HEK293T (cell line): ENCODE measurements at regions of chr21 and their contacts with region 1.

Region 1: DNA sequence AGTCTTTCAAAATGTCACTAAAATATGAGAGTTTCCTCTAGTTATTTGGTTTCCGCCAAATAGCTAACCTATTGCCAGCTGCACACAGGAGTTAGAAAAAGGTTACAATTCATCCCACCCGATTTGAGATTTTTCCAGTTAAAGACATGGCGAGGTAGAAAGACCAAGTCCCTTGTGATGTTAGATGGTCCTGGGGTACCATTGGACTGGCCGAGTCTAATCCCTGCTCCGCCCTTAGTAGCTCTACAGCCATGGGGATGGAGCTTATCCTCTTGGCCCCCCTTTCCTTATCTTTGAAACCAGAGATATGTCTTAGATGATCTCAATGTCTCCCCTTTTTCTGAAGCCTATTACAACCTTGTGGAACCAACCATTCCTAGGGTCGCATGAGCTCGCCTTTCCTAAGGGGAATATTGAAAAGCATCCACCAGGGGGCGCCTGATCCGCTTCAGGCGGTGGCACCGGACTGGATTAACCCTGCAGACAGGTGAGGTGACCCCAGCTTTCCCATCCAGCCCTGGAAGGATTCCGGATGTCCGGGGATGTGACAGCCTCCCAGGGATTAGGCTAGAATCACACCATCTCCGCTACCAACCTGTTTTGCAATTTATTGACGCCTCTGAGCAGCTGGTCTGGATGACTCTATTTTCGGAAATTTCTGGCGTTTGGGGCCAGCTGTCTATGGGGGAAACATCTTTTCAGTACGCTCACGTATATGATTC is 68.3 kb upstream of the SIM2 start:
- DNase-seq: peak; percentile 83

Region 2: GRCh38 chr21:36640721-36641244 is 10.1 kb after region 1 on chr21:
- CTCF ChIA-PET with region 1: interaction called, 16 read pairs
- POLR2A ChIA-PET with region 1: no interaction called
- DNase-seq: peak; percentile 31

Region 3: GRCh38 chr21:36661511-36662309 is 31.1 kb after region 1 on chr21:
- CTCF ChIA-PET with region 1: interaction called, 13 read pairs
- POLR2A ChIA-PET with region 1: no interaction called
- DNase-seq: peak; percentile 68

Region 4: DNA sequence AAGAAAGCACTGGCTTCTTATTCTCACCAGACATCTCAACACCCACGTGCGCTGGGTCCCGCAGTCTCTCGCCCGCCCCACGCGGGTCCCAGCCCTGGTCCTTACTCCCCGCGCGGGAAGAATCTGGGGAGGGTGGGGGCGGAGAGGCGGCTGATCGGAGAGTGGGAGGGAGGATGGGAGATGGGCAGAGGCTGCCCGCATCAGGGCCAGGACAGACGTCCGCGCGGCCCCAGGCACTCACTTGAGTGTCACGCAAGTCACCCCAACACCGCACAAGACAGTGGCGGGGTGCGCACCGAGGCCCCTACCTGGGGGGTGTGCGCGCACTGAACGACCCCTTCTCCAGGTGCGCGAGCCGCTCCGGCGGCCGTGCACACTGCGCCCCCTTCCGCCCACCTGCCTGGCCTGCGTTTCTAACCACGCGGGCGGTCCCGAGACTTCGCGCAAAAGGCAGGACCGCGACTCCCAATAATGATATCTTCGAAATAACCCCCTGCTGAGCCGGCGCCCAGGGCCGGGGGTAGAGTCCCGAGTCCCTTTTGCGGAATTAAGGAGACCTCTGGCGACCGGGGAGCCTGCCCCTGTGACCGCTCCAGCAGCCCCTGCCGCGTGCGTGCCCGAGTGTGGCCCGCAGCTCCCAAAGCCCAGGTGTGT is 62.3 kb after region 1 on chr21:
- CTCF ChIA-PET with region 1: interaction called, 10 read pairs
- POLR2A ChIA-PET with region 1: interaction called, 5 read pairs
- DNase-seq: no peak

Region 5: GRCh38 chr21:36854391-36854790 is 223.7 kb after region 1 on chr21:
- CTCF ChIA-PET with region 1: interaction called, 21 read pairs
- POLR2A ChIA-PET with region 1: no interaction called
- DNase-seq: peak; percentile 77